K562 (cell line): ENCODE measurements at regions of chr21 and their contacts with region 1.

Region 1: GRCh38 chr21:38355992-38356797 is 99.4 kb downstream of the KCNJ15 start:
- DNase-seq: peak; percentile 83 to 93 (median 90)
- ATAC-seq: peak; percentile 96
- H3K4me3 ChIP-seq: no peak overlapping the region
- H3K27ac ChIP-seq: no peak overlapping the region
- H3K4me1 ChIP-seq: peaks cover 0 to 7% of the 10 kb centered on the region in 2 experiments; a peak in 2 of 5 replicates
- H3K27me3 ChIP-seq: peaks cover 0 to 11% of the 10 kb centered on the region in 2 experiments; a peak in 3 of 5 replicates
- CTCF ChIP-seq: peak; percentile 95 to 99 (median 98)
- EP300 ChIP-seq: no peak
- POLR2A ChIP-seq: no peak
- RAD21 ChIP-seq: peak; percentile 94 to 98

Region 2: DNA sequence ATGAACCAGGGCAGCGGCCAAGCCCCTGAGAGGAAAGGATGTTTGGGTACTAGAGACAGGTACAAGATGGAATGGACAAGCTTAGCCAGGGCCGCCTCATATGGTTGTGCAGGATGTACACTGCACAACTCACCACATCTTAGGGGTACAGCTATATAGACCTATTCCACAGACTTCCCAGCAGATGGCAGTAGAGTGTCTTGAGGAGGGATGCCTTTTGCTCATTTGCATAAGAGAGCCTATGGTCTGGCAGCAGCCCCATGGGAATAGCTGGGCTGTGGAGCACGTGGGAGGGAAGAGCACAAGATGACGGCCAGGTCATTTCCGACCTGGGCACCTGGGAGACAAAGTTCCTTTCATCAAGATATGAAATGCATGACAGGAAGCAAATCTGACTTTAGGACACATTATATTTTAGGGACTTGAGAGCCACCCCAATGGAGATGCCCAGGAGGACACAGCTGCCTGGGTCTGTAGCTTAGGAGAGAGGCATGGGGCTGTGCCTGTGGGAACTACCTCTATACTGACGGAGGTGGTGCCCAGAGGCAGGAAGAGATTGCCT is 655.5 kb before region 1 on chr21:
- CTCF ChIA-PET with region 1: interaction called, 8 read pairs
- POLR2A ChIA-PET with region 1: no interaction called
- in situ Hi-C with region 1: loop called (anchors 5 kb)
- intact Hi-C with region 1: loop called (anchors 1 kb)
- DNase-seq: peak; percentile 79 to 86 (median 82)
- ATAC-seq: peak; percentile 100
- H3K4me3 ChIP-seq: no peak overlapping the region
- H3K27ac ChIP-seq: no peak overlapping the region
- H3K4me1 ChIP-seq: no peaks in the 10 kb centered on the region
- H3K27me3 ChIP-seq: peaks cover 5 to 17% of the 10 kb centered on the region in 2 experiments; a peak in 4 of 5 replicates
- CTCF ChIP-seq: peak; percentile 80 to 91 (median 86)
- EP300 ChIP-seq: no peak
- POLR2A ChIP-seq: no peak
- RAD21 ChIP-seq: peak; percentile 63 to 90

Region 3: DNA sequence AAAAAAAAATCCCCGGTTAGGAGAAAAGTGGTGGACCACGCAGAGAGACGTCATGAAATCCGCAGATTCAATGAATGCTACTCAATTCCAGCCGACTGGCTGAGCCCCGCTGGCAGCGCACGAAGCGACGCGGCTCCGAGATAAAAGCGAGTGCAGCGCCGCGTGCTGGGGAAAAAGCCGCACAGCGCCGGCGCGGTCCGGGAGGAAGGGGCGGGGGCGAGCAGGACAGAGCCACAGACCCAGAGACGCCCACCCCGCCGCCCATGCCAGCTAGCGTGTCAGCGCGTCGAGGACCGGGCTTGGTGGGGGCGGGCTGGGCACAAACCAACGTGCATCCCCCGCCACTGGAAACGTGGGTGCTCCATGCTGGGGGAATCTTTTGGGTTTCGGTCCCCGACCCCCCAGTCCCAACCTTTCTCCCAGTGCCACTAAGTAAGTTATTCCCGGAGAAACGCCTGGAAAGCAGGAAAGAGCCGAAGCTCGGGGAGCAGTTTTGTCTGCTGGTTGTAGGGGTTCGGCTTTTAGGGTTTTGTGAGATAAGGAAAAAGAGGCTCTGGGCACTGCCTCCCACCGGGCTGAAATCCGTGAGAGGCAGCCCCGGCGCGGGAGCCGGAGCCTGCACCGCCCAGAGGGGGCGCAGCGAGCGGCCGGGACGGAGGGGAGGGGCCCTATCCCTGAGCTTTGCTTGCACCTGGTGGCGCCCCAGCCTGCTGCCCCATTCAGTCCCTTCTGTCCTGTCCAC is 439.7 kb before region 1 on chr21 and contains the start of gene KCNJ6:
- CTCF ChIA-PET with region 1: no interaction called
- POLR2A ChIA-PET with region 1: no interaction called
- in situ Hi-C with region 1: no loop called
- intact Hi-C with region 1: loop called (anchors 10 kb)
- DNase-seq: peak; percentile 59 to 78 (median 62)
- ATAC-seq: peak; percentile 99
- H3K4me3 ChIP-seq: no peak within 1 kb of the TSS; the same call in 1 of the 2 replicates
- H3K27ac ChIP-seq: no peak within 1 kb of the TSS
- H3K4me1 ChIP-seq: peaks cover 0 to 18% of the 10 kb centered on the region in 2 experiments; a peak in 2 of 5 replicates
- H3K27me3 ChIP-seq: peaks cover 13 to 41% of the 10 kb centered on the region in 2 experiments; a peak in 4 of 5 replicates
- CTCF ChIP-seq: peak; percentile 67 to 94 (median 74)
- EP300 ChIP-seq: no peak
- POLR2A ChIP-seq: no peak
- RAD21 ChIP-seq: peak in 1 of 2 experiments; percentile 50; a peak in 2 of 4 replicates
- polyA plus RNA-seq, gene KCNJ6: 0.13 TPM

Region 4: DNA sequence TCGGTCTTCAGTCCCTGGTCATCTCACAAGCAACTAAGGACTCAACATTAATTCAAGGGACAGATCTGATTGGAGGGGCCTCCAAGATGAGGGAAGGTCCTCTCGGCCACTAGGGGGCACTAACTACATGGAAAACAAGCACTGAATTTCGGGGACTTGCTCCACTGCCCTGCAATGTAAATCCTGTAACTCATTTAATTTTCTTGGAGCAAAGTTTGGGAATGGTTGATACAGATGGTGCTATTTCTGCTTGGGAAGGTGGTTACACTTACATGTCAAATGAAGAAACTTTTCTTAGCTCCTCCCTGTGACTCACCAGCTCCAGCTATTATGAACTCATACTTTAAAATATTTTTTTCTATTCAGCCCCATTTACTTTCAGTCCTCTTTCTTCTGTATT is 196.8 kb before region 1 on chr21:
- CTCF ChIA-PET with region 1: interaction called, 6 read pairs
- POLR2A ChIA-PET with region 1: no interaction called
- in situ Hi-C with region 1: loop called (anchors 5 kb)
- intact Hi-C with region 1: loop called (anchors 1 kb)
- DNase-seq: peak; percentile 83 to 88 (median 86)
- ATAC-seq: peak; percentile 96
- H3K4me3 ChIP-seq: no peak overlapping the region
- H3K27ac ChIP-seq: no peak overlapping the region
- H3K4me1 ChIP-seq: no peaks in the 10 kb centered on the region
- H3K27me3 ChIP-seq: no peaks in the 10 kb centered on the region
- CTCF ChIP-seq: peak; percentile 77 to 89 (median 86)
- EP300 ChIP-seq: no peak
- POLR2A ChIP-seq: no peak
- RAD21 ChIP-seq: peak; percentile 33 to 68; a peak in 3 of 4 replicates

Region 5: DNA sequence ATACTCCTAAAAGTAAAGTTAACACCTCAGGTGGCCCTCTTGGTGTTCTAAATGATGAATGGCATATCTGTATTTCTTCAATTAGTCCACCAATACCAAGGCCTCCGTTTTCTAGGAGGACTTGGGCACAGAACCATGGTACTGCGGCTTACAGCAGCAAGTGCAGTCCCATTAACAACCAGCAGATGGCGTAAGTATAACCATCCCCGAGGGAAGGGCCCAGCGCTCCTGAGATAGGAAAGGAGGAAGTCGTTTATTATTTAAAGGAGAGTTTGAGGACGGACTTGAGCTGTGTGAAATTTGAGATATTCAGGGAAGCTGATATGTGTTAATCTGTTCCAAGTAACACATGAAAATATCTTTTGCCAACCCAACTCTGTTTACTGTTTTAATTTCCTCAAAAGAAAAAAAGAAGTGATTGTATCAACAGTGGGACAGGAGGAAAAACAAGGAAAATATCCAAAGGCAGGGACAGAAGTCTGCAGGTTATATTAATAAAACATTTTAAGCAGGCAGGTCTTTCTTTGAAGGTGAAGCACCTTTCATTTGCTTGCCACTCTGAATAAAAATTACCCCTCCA is 137.1 kb before region 1 on chr21:
- CTCF ChIA-PET with region 1: interaction called, 7 read pairs
- POLR2A ChIA-PET with region 1: no interaction called
- in situ Hi-C with region 1: no loop called
- intact Hi-C with region 1: loop called (anchors 1 kb)
- DNase-seq: peak; percentile 83 to 90 (median 87)
- ATAC-seq: peak; percentile 93
- H3K4me3 ChIP-seq: no peak overlapping the region
- H3K27ac ChIP-seq: peak overlapping the region; percentile 86
- H3K4me1 ChIP-seq: peaks cover 0 to 15% of the 10 kb centered on the region in 2 experiments; a peak in 2 of 5 replicates
- H3K27me3 ChIP-seq: no peaks in the 10 kb centered on the region; a peak in 1 of 5 replicates
- CTCF ChIP-seq: peak; percentile 85 to 95 (median 89)
- EP300 ChIP-seq: no peak
- POLR2A ChIP-seq: no peak
- RAD21 ChIP-seq: peak; percentile 36 to 82; a peak in 3 of 4 replicates

Region 6: GRCh38 chr21:38269576-38269936 is 86.6 kb before region 1 on chr21:
- CTCF ChIA-PET with region 1: no interaction called
- POLR2A ChIA-PET with region 1: no interaction called
- in situ Hi-C with region 1: no loop called
- intact Hi-C with region 1: no loop called
- DNase-seq: no peak
- ATAC-seq: no peak
- H3K4me3 ChIP-seq: no peak overlapping the region
- H3K27ac ChIP-seq: no peak overlapping the region
- H3K4me1 ChIP-seq: no peaks in the 10 kb centered on the region
- H3K27me3 ChIP-seq: peaks cover 15 to 28% of the 10 kb centered on the region in 2 experiments
- CTCF ChIP-seq: no peak
- EP300 ChIP-seq: no peak
- POLR2A ChIP-seq: no peak
- RAD21 ChIP-seq: no peak

Region 7: DNA sequence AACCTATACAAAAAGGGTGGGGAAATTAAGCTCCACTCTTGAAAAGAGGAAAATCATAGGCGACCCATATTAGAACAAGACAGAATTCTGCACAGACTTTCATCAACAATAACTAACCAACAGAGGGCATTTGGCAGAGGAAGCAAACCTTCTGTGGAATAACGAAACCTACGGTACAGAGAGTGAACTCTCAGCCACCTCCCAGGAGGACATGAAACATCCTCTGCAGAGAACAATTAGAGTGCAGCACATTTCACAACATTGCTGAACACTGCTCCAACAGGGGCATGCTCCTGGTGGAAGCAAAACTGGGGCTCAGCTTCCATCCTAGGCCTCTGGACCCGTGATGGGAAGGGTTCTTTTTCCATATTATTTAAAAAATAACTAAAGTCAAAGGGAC is 11.5 kb after region 1 on chr21:
- CTCF ChIA-PET with region 1: no interaction called
- POLR2A ChIA-PET with region 1: no interaction called
- in situ Hi-C with region 1: no loop called
- intact Hi-C with region 1: no loop called
- DNase-seq: no peak
- ATAC-seq: no peak
- H3K4me3 ChIP-seq: no peak overlapping the region
- H3K27ac ChIP-seq: no peak overlapping the region
- H3K4me1 ChIP-seq: no peaks in the 10 kb centered on the region
- H3K27me3 ChIP-seq: no peaks in the 10 kb centered on the region
- CTCF ChIP-seq: no peak
- EP300 ChIP-seq: no peak
- POLR2A ChIP-seq: no peak
- RAD21 ChIP-seq: no peak

Region 8: GRCh38 chr21:38380481-38381137 is 24.4 kb after region 1 on chr21:
- CTCF ChIA-PET with region 1: no interaction called
- POLR2A ChIA-PET with region 1: no interaction called
- in situ Hi-C with region 1: no loop called
- intact Hi-C with region 1: no loop called
- DNase-seq: no peak
- ATAC-seq: peak; percentile 57; the same call in 1 of the 3 replicates
- H3K4me3 ChIP-seq: no peak overlapping the region
- H3K27ac ChIP-seq: no peak overlapping the region
- H3K4me1 ChIP-seq: no peaks in the 10 kb centered on the region
- H3K27me3 ChIP-seq: peaks cover 33 to 36% of the 10 kb centered on the region in 2 experiments; a peak in 4 of 5 replicates
- CTCF ChIP-seq: peak in 2 of 3 experiments; percentile 4 to 25; a peak in 1 of 6 replicates
- EP300 ChIP-seq: no peak
- POLR2A ChIP-seq: no peak
- RAD21 ChIP-seq: no peak